ENCODE measurements at regions of chr12 and their contacts with region 1.

Region 1: DNA sequence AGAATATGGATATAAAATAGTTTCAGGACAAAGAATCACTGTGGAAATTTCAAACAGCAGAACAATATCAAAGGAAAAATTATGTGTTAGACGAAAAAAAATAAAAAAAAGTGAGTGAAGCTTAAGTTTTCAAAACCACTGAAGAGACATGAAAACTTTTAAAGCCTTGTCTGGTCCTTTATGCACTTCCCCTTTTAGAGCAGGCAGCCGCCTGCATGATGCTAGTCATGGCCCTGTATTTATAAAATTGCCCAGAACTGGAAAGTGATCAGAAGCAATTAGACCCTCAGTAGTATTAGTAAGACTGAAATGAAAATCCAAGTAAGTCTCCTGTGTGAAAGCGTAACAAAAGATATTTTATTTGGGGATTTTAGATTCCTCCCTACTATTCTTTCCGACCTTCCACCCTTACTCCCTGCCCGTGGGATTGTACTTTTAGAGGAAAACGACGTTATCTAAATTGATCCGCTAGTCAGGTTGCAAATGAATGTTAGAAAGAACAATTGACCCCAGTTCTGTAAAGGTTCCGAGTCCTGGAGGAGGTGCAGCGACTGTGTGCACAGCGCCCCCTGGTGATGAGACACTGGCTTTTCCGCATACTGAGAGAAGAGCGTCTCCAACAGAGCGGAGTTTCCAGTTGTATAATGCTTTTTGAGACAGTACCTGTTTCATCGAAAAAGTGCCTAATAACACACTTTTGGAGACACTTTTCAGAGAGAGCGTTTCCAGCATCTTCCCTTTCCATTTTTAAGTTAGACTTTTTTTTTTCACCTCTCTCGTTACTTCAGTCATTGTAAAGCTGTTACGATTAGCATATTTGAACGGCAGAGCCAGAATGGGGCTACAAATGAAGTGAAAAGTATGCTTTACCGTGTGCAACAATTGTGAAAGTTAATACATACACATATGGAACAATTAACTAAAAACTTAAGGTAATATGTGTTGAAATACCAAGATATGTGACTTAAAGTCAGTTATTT is 12.4 kb downstream of the MGST1 start:
- DNase-seq: peak; percentile 77
- H3K4me3 ChIP-seq: no peak overlapping the region
- H3K27ac ChIP-seq: no peak overlapping the region
- H3K4me1 ChIP-seq: no peaks in the 10 kb centered on the region
- H3K27me3 ChIP-seq: no peaks in the 10 kb centered on the region
- CTCF ChIP-seq: peak; percentile 93

Region 2: GRCh38 chr12:15979096-15980092 is 380.4 kb before region 1 on chr12:
- CTCF ChIA-PET with region 1: no interaction called
- POLR2A ChIA-PET with region 1: no interaction called
- intact Hi-C with region 1: loop called (anchors 10 kb)
- DNase-seq: peak; percentile 6
- H3K4me3 ChIP-seq: no peak overlapping the region
- H3K27ac ChIP-seq: no peak overlapping the region
- H3K4me1 ChIP-seq: peaks cover 12% of the 10 kb centered on the region
- H3K27me3 ChIP-seq: no peaks in the 10 kb centered on the region
- CTCF ChIP-seq: peak; percentile 49

Region 3: GRCh38 chr12:16165506-16165905 is 194.3 kb before region 1 on chr12:
- CTCF ChIA-PET with region 1: no interaction called
- POLR2A ChIA-PET with region 1: no interaction called
- intact Hi-C with region 1: loop called (anchors 1 kb)
- DNase-seq: peak; percentile 82
- H3K4me3 ChIP-seq: no peak overlapping the region
- H3K27ac ChIP-seq: no peak overlapping the region
- H3K4me1 ChIP-seq: peaks cover 20% of the 10 kb centered on the region
- H3K27me3 ChIP-seq: peaks cover 13% of the 10 kb centered on the region
- CTCF ChIP-seq: peak; percentile 77

Region 4: GRCh38 chr12:16189849-16190248 is 170.0 kb before region 1 on chr12:
- CTCF ChIA-PET with region 1: no interaction called
- POLR2A ChIA-PET with region 1: no interaction called
- intact Hi-C with region 1: loop called (anchors 5 kb)
- DNase-seq: peak; percentile 63
- H3K4me3 ChIP-seq: no peak overlapping the region
- H3K27ac ChIP-seq: no peak overlapping the region
- H3K4me1 ChIP-seq: no peaks in the 10 kb centered on the region
- H3K27me3 ChIP-seq: no peaks in the 10 kb centered on the region
- CTCF ChIP-seq: peak; percentile 55

Region 5: GRCh38 chr12:17097674-17098073 is 737.9 kb after region 1 on chr12:
- CTCF ChIA-PET with region 1: no interaction called
- POLR2A ChIA-PET with region 1: no interaction called
- intact Hi-C with region 1: no loop called
- DNase-seq: no peak
- H3K4me3 ChIP-seq: no peak overlapping the region
- H3K27ac ChIP-seq: no peak overlapping the region
- H3K4me1 ChIP-seq: no peaks in the 10 kb centered on the region
- H3K27me3 ChIP-seq: no peaks in the 10 kb centered on the region
- CTCF ChIP-seq: no peak